ENCODE measurements at regions of chr22 and their contacts with region 1.

Region 1: GRCh38 chr22:37933711-37934376 is 19.6 kb downstream of the C22orf23 start:
- DNase-seq: peak; percentile 75 to 95
- H3K4me3 ChIP-seq: no peak overlapping the region
- H3K27ac ChIP-seq: peak overlapping the region; percentile 33 to 75
- H3K4me1 ChIP-seq: peaks cover 4 to 15% of the 10 kb centered on the region in 2 donors
- H3K27me3 ChIP-seq: no peaks in the 10 kb centered on the region
- CTCF ChIP-seq: peak; percentile 96 to 99 (median 98)

Region 2: GRCh38 chr22:37817705-37818408 is 116.0 kb before region 1 on chr22:
- intact Hi-C with region 1: loop called (anchors 1 kb)
- DNase-seq: peak; percentile 33 to 89
- H3K4me3 ChIP-seq: peak overlapping the region; percentile 56 to 62
- H3K27ac ChIP-seq: no peak overlapping the region
- H3K4me1 ChIP-seq: peaks cover 8 to 15% of the 10 kb centered on the region in 2 donors
- H3K27me3 ChIP-seq: no peaks in the 10 kb centered on the region
- CTCF ChIP-seq: peak; percentile 95 to 96 (median 95)

Region 3: GRCh38 chr22:37892566-37893335 is 41.1 kb before region 1 on chr22:
- intact Hi-C with region 1: loop called (anchors 5 kb)
- DNase-seq: peak in 1 of 2 donors; percentile 75
- H3K4me3 ChIP-seq: no peak overlapping the region
- H3K27ac ChIP-seq: peak overlapping the region; percentile 75 to 79
- H3K4me1 ChIP-seq: peaks cover 9 to 23% of the 10 kb centered on the region in 2 donors
- H3K27me3 ChIP-seq: no peaks in the 10 kb centered on the region
- CTCF ChIP-seq: no peak

Region 4: GRCh38 chr22:37905534-37906363 is 28.1 kb before region 1 on chr22 and contains the start of gene MICALL1:
- intact Hi-C with region 1: loop called (anchors 1 kb)
- DNase-seq: peak in 1 of 2 donors; percentile 84
- H3K4me3 ChIP-seq: peak within 1 kb of the TSS; percentile 85 to 100
- H3K27ac ChIP-seq: peak within 1 kb of the TSS; percentile 88 to 93
- H3K4me1 ChIP-seq: peaks cover 7 to 29% of the 10 kb centered on the region in 2 donors
- H3K27me3 ChIP-seq: no peaks in the 10 kb centered on the region
- CTCF ChIP-seq: peak in 1 of 3 experiments; percentile 39
- total RNA-seq, gene MICALL1: 43.9 TPM

Region 5: DNA sequence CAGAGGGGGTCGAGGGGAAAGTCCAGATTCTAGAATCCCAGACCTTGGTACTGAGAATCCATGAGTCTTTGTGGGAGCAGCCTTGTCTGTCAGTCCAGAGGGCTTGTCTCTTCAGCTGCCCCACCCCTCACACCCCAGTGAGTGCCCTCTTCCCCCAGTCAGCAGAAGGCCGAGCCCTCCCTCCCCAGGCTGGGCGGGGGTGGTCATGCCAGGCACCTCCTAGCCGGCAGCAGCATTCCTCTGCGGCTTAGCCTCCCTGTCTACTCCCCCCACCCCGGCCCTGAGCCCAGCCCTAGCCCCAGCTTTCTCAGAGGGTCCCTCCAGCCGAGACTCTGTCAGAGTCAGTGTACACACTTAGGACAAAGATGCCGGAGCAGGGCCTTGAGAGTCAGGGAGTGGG is 45.9 kb after region 1 on chr22:
- intact Hi-C with region 1: no loop called
- DNase-seq: no peak
- H3K4me3 ChIP-seq: no peak overlapping the region
- H3K27ac ChIP-seq: no peak overlapping the region
- H3K4me1 ChIP-seq: no peaks in the 10 kb centered on the region
- H3K27me3 ChIP-seq: no peaks in the 10 kb centered on the region
- CTCF ChIP-seq: no peak

Region 6: GRCh38 chr22:37996515-37997246 is 62.8 kb after region 1 on chr22:
- intact Hi-C with region 1: no loop called
- DNase-seq: no peak
- H3K4me3 ChIP-seq: no peak overlapping the region
- H3K27ac ChIP-seq: no peak overlapping the region
- H3K4me1 ChIP-seq: no peaks in the 10 kb centered on the region
- H3K27me3 ChIP-seq: no peaks in the 10 kb centered on the region
- CTCF ChIP-seq: no peak